Activated CD4-positive, alpha-beta T cell treated with anti-CD3 and anti-CD28 coated beads, Interleukin-2, amount 10 ng/mL, durations not matched to agents 24 days and 14 days (primary cell): ENCODE measurements at regions of chr13 and their contacts with region 1.

Region 1: DNA sequence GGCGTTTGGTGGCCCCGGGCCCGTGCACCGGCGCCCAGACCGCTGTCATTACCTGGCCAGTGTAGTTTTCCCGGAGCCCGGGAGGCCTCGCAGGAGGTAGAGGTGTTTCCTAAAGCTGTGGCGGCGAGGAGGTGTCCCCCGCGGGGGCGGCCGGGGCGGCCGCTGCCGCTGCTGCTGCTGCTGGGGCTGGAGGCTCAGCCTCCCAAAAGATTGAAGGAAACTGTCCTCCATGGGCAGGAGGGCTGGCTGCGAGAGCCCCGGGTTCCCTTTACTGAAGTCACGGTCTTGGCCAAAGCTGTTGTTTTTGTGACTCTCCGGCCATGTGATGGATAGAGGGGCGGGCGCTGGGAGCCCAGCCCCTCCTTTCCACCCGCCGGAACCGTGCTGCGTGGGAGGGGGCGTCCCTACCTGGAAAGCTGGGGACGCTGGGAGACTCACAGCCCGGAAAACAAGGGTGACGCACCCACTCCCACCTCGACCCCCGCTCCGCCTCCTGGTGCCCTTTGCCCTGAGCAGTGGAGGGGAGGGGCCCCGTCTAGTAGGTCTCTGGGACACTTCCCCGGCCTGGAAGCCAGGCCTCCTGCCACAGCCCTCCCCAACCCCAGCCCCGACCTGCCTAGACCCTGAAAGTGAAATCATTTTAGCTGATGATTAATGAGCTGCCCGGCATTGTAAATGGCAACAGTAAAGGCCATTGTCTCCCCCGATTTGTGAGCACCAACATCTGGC is at the start of gene N4BP2L1:
- DNase-seq: peak; percentile 94
- H3K4me3 Mint-ChIP-seq: peak within 1 kb of the TSS; percentile 99
- H3K27ac Mint-ChIP-seq: peak within 1 kb of the TSS; percentile 98
- H3K4me1 Mint-ChIP-seq: peaks cover 44% of the 10 kb centered on the region
- H3K27me3 Mint-ChIP-seq: no peaks in the 10 kb centered on the region
- total RNA-seq, gene N4BP2L1: 16.6 and 17.9 TPM in 2 replicates

Region 2: DNA sequence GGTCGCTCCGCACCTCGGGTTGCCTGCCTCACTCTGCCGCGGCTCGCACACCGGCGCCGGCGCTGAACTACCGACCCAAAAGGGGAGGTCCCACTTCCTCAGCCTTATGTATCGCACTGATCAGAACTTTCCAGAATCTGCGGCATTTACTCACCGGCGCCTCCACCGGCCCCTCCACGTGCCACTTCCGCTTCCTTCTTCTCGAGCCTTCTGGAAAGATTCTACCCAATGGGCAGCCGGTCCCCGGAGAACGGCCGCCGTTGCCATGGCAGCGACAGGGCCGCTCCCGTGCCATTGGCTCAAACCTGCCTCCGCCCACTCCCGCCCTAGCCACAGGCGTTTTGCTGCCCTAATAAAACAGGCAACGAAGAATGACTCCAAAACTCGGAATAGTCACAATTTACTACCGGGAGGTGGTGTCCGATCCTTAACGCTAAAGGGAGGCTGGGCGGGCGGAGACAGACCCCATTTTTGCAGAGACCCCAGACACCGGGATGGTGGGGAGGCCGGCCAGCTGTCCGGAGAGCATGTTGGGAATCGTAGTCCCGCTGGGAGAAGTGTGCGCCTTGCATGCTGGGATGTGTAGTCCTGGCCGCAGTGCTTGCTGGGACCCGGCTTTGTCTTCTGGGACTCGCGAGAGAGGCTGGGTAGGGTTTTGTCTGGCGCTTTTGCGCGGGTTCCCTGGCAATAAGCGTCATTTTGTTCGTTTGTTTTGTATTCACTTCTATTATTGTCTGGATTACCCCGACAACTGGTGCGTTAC is 1266.0 kb before region 1 on chr13 and contains the start of gene HSPH1:
- intact Hi-C with region 1: loop called (anchors 5 kb)
- DNase-seq: peak; percentile 100
- H3K4me3 Mint-ChIP-seq: peak within 1 kb of the TSS; percentile 99
- H3K27ac Mint-ChIP-seq: peak within 1 kb of the TSS; percentile 99
- H3K4me1 Mint-ChIP-seq: peaks cover 45% of the 10 kb centered on the region
- H3K27me3 Mint-ChIP-seq: peaks cover 2% of the 10 kb centered on the region
- total RNA-seq, gene HSPH1: 381 and 385 TPM in 2 replicates

Region 3: GRCh38 chr13:32443111-32443510 is 15.1 kb after region 1 on chr13:
- intact Hi-C with region 1: loop called (anchors 2 kb)
- DNase-seq: peak; percentile 78
- H3K4me3 Mint-ChIP-seq: no peak overlapping the region
- H3K27ac Mint-ChIP-seq: no peak overlapping the region
- H3K4me1 Mint-ChIP-seq: peaks cover 9% of the 10 kb centered on the region
- H3K27me3 Mint-ChIP-seq: no peaks in the 10 kb centered on the region

Region 4: GRCh38 chr13:32530841-32531253 is 102.8 kb after region 1 on chr13:
- intact Hi-C with region 1: loop called (anchors 2 kb)
- DNase-seq: peak; percentile 75
- H3K4me3 Mint-ChIP-seq: peak overlapping the region; percentile 74
- H3K27ac Mint-ChIP-seq: peak overlapping the region; percentile 88
- H3K4me1 Mint-ChIP-seq: peaks cover 53% of the 10 kb centered on the region
- H3K27me3 Mint-ChIP-seq: no peaks in the 10 kb centered on the region

Region 5: GRCh38 chr13:32553720-32554119 is 125.7 kb after region 1 on chr13:
- intact Hi-C with region 1: no loop called
- DNase-seq: no peak
- H3K4me3 Mint-ChIP-seq: no peak overlapping the region
- H3K27ac Mint-ChIP-seq: no peak overlapping the region
- H3K4me1 Mint-ChIP-seq: no peaks in the 10 kb centered on the region
- H3K27me3 Mint-ChIP-seq: peaks cover 8% of the 10 kb centered on the region

Region 6: DNA sequence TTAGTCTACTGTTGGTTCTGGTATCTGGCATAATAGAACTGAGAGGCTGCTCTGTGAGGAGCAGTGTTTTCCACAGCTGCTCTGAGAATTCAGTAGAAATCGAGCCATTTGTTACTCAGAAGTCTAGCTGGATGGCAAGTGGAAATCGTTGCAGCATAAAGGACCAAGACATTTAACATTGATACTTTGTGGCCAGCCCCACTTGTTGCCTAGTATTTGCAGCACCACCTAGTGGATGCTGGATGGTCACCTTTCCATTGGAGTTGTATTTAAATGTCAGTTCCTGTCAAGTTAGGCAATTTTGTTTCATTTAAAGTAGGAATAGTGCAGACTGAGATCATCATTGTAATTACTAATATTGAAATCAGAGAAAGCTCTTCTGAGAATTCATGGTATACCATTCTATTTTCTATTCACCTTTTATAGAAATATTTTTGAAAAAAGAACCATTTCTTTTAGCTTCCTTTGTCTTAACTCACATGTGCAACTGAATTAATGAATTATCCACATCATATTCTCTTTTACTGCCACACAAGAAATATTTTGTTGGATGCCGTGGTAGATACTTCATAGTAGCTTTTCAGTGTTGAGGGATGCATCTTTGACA is 222.8 kb after region 1 on chr13:
- intact Hi-C with region 1: loop called (anchors 5 kb)
- DNase-seq: peak; percentile 87
- H3K4me3 Mint-ChIP-seq: no peak overlapping the region
- H3K27ac Mint-ChIP-seq: no peak overlapping the region
- H3K4me1 Mint-ChIP-seq: peaks cover 29% of the 10 kb centered on the region
- H3K27me3 Mint-ChIP-seq: no peaks in the 10 kb centered on the region